ENCODE measurements at regions of chr16 and their contacts with region 1.

Region 1: DNA sequence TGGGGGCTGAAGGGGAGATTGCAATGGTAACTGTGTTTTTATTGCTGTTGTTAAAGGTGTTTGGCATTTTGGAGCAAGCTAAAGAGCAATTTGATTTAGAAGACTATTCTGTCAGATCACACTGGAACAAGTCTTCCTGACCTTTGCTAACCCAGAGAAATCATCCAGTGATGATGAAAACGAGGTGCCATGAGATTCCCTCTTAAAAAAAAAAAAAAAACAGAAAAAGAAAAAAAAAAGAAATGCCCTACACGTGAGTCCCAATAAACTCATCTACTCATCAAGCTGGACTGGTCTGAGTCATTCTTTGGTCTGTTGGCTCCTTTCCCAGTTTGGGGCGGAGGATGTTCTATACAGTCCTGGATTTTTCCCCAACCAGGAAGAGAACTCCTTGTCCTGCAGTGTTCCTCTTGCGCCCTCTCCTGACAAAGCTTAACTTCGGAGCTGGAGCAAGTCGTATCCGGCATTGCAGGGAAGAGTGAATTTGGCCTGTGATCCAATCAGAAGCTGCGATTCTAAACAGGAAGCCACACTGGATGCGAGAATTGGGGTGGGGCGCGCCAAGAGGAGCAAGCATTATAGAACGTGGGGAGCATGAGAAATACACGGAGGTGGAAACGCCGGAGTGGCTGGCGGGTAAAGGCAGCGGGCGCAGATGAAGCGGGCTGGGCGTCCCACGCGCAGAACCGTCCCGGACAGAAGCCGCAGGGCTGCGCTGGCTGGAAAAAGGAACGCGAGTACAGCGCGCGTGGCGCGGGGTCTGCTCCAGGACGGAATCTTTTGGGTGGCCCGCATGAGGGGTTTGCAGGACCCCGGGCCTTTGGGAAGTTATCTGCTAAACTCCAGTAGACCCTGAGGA is 22.4 kb upstream of the CRYM start:
- DNase-seq: peak; percentile 100

Region 2: GRCh38 chr16:21184834-21185233 is 115.7 kb before region 1 on chr16:
- in situ Hi-C with region 1: loop called (anchors 10 kb)
- DNase-seq: peak; percentile 57

Region 3: DNA sequence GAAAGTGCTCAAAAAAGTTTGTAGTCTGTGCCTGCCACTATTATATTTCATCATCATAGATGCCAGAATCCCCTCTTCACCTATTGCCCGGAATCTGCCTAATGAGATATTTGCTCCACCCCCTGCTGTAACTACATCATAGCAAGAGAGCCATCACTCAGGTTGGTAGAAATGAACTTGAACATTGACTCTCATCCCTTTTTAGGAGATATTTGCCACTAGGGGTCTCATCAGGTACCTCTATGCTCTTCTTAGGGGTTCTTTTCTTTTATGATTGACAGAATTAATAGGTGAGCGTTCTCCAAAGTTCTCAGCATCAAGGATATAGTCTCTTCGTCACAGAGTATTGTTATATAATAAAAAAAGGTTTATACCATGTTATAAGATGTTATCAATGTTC is 47.1 kb before region 1 on chr16:
- in situ Hi-C with region 1: loop called (anchors 10 kb)
- DNase-seq: no peak